ENCODE measurements at regions of chr9 and their contacts with region 1.

Region 1: DNA sequence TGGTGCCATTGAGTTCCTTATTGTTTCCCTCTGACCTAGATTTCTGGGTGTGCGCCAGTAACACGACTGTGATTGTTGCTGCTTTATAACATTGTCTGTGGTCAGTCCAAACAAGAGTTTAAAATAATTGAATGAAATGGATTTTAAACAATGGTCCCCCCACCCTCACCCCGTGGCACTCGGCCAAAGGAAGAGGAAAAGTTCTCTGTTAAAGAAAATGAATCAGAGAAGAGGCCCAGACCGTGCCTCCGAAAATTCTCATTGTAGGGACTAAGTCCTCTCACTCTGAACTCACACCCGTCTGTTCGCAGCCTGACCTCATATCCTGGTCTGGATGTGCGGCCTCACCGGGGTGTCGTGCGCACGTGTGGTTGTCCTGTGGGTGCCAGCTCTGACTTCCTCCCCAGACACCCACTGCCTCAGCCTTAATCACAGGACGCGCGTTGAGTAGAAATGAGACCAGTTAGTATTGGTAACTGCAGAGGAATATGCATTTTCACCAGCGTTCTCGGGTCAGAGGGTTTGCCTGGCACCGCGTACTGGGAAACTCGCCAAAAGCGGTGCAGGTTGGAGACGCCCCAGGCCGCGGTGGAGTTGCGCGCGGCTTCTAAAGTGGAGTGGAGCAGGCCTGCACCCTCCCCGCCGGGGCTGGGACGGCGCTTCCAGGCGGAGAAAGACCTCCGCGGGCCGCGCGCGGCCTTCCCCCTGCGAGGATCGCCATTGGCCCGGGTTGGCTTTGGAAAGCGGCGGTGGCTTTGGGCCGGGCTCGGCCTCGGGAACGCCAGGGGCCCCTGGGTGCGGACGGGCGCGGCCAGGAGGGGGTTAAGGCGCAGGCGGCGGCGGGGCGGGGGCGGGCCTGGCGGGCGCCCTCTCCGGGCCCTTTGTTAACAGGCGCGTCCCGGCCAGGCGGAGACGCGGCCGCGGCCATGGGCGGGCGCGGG is at the start of gene ABL1:
- DNase-seq: peak; percentile 77
- ATAC-seq: peak; percentile 87 to 90
- total RNA-seq, gene ABL1: 40.8 to 55.4 TPM

Region 2: GRCh38 chr9:130530932-130531331 is 303.7 kb before region 1 on chr9:
- intact Hi-C with region 1: no loop called
- DNase-seq: peak; percentile 71
- ATAC-seq: peak; percentile 82 to 83

Region 3: GRCh38 chr9:130651752-130652151 is 182.9 kb before region 1 on chr9:
- intact Hi-C with region 1: no loop called
- DNase-seq: no peak
- ATAC-seq: no peak

Region 4: DNA sequence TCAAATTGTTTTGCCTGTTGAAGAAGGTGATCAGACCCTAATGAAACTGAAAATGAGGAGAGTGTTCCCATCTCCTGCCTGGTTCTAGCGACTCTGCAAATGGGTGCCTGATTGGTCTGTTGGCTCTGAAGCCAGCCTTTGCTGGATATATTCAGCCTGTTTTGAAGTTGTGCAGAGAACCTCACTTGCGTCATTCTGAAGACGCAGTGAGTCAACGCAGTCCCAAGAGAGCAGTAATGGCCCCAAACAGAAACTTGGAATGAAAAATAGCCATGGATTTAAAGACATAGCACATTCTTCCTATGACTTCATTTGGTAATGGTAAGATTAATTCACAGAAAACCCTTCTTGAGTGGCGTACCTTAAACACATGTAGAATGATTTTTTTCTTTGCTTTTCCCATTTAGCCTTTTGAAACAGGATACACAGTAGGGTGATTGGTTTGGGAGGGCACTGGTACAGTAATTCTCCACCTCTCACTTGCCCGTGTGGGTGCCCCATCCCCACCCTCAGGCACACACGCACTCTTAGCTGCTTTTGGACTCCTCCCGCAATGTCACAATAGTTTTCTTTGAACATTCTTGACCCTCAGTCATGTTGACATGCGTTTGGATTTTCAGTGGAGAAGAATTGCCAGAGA is 53.7 kb before region 1 on chr9:
- intact Hi-C with region 1: loop called in 1 of 2 experiments (anchors 5 kb)
- DNase-seq: peak; percentile 76
- ATAC-seq: peak; percentile 93 to 95

Region 5: DNA sequence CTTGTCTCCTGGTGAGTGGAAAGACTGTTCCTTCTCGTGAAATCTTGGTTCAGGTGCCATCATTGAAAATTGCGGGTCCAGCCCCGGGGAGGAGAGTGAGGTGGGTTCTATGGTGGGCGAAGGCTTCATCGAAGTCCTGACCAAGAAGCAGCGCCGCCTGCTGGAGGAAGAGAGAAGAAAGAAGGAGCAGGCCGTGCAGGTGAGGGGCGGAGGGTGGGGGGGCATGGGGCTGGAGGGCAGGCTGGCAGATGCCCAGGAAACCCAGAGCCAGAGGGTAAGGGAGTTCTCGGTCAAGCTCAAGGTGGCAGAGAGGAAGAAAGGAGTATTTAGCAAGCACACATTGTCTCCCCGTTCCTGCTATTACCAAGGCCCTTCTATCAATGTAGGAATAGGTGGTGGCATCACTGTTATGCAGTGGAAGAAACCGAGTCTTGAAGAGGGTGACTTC is 643.8 kb after region 1 on chr9:
- intact Hi-C with region 1: no loop called
- DNase-seq: peak; percentile 55
- ATAC-seq: peak in 1 of 2 donors; percentile 9